Heart left ventricle (tissue), 16 donors: ENCODE measurements at regions of chr3 and their contacts with region 1.

Region 1: DNA sequence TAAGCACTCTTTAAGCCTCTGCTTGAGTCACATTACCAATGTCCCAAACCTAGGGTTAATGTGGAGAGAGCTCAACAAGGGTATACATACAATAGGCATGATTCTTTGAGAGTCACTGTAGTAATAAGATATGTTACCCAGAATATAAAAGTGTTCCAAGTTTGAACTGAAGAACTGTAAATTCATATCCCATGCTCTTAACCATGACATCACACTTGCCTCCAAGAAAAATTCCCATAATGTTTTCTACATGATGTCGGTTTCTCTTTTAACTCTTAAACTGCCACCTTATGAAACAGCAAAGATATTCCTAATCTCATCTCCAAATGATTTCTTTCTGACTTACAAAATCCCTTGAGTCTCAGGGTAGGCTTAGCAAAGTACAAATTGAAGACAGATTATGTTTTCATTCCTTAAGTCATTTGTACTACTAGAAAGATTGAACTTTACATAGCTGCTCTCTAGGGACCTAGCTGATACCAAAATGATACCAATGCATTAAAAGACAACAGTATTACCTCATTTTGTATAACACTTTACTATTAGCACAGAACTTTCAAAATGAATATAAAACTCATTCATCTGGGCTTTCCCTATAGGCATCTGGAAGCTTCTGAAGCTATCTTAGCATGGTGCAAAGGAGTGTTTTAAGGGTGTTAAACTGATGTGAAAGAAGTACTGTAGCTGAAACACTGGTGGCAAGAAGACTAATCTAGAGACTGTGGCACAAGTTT is 127.1 kb downstream of the KCNMB2 start:
- DNase-seq: no peak
- ATAC-seq: no peak
- H3K4me3 ChIP-seq: no peak overlapping the region
- H3K27ac ChIP-seq: peak overlapping the region in 2 of 12 donors; percentile 0 to 76
- H3K4me1 ChIP-seq: peaks cover 0 to 35% (median 3%) of the 10 kb centered on the region in 12 donors
- H3K27me3 ChIP-seq: no peaks in the 10 kb centered on the region
- CTCF ChIP-seq: no peak
- POLR2A ChIP-seq: no peak

Region 2: GRCh38 chr3:178454726-178455125 is 208.6 kb before region 1 on chr3:
- intact Hi-C with region 1: loop called in 1 of 10 experiments (anchors 10 kb)
- DNase-seq: peak; percentile 70 to 82 (median 80)
- ATAC-seq: peak; percentile 93 to 98 (median 96)
- H3K4me3 ChIP-seq: no peak overlapping the region
- H3K27ac ChIP-seq: peak overlapping the region in 10 of 12 donors; percentile 21 to 76 (median 59)
- H3K4me1 ChIP-seq: peaks cover 0 to 32% (median 16%) of the 10 kb centered on the region in 12 donors
- H3K27me3 ChIP-seq: no peaks in the 10 kb centered on the region
- CTCF ChIP-seq: no peak
- POLR2A ChIP-seq: no peak

Region 3: DNA sequence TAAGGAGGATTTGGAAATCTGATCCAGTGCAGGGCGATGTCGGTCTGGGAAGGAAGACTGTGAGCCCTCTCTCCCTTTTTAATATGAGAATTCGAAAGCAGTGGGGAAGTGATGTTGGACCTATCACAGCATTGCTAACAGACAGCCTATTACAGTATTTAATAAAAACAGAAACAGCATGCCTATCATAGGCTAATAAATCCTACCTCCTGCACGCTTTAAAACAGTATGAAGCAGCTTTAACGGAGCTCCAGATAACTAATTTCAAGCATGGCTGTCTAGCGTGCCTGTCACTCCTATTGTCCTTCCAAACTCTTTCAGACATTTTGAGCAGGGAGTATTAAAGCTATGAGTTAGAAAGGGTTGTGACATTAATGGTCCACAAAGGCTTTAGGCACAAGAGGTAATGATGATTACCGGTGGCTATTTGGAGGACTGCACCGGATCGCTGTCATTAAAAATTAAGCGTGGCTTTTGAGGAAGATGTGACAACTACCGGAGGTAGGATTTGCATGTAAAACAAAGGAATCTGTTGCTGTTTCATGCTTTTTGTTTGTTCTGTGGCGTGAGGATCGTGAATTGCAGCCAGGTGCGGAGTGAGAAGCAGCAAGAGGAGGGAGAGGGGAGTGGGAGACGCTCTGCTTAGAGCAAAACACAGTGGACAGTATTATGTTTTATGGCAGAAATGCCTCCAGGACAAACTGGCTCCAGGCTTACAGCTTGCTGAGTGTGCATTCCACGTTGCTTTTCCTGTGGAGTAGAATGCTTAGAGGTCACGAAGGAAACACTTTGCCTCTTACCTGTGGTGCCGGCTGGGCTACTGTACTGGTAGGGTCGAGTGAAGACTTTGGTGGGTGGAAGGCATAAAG is 126.9 kb before region 1 on chr3 and contains the start of gene KCNMB2:
- intact Hi-C with region 1: loop called in 1 of 10 experiments (anchors 10 kb)
- DNase-seq: no peak
- ATAC-seq: peak; percentile 71 to 88 (median 84)
- H3K4me3 ChIP-seq: peak within 1 kb of the TSS; percentile 38 to 64 (median 52)
- H3K27ac ChIP-seq: peak within 1 kb of the TSS in 7 of 12 donors; percentile 0 to 53 (median 44)
- H3K4me1 ChIP-seq: peaks cover 0 to 6% (median 0%) of the 10 kb centered on the region in 12 donors
- H3K27me3 ChIP-seq: peaks cover 0 to 7% (median 0%) of the 10 kb centered on the region in 9 donors
- CTCF ChIP-seq: no peak
- POLR2A ChIP-seq: no peak
- total RNA-seq, gene KCNMB2: 1.3 to 5.7 (median 2.7) TPM in 8 of 9 donors, not detected in the other